Activated CD4-positive, alpha-beta T cell treated with anti-CD3 and anti-CD28 coated beads, Interleukin-2, amount 10 ng/mL, durations not matched to agents 24 days and 14 days (primary cell): ENCODE measurements at regions of chr4 and their contacts with region 1.

Region 1: DNA sequence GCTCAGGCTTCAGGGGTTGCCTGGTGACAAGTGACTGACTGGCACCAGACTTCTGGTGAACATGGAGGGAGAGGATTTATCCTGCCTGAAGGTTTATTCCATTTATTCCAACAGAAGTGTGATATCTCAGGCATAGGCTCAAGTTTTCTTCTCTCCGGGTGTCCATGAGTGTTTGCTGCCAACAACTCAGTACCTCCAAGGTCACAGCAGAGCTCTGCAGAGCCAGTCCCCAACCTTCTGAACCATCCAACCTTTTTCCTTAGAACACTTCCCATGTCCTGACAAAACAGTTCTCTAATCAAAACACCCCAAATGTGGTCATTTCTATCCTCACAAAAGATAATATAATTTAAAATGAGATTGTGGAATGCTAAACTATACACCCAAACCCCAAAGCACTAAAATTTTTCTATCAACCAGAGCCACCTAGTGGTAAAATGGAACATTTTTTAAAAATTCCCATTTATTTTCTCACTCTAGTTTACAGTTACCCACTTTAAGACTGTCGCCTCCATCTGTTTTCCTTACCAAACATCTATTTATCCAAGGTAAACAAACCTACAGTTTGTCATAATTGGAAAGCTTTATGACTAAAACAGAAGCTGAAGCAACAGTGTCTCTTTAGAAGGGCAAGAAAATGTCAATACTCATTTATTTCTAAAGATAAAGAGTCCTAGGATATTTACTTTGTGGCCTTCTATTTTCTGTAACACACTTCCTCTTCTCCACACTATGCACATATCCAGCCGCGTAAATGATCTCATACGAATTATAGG is 39.6 kb downstream of the TMEM154 start:
- DNase-seq: no peak
- H3K4me3 Mint-ChIP-seq: no peak overlapping the region
- H3K27ac Mint-ChIP-seq: no peak overlapping the region
- H3K4me1 Mint-ChIP-seq: peaks cover 24% of the 10 kb centered on the region
- H3K27me3 Mint-ChIP-seq: no peaks in the 10 kb centered on the region

Region 2: DNA sequence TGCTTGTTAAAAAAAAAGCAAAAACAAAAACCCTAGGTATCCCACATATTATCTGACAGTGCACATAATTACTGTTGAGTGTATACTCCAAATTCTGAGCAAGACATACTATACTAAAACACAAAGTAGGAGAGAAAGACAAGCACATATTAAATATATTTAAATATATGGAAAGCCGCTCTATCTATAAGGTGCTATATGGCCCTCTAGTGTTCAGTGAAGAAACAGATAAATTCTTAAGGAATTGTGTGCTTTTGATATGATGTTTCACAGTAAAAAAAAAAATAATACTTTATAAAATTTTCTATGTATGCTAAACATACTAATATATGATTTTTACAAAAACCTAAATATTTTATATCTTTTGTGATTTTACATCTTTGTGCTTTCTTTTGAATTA is 242.2 kb before region 1 on chr4:
- intact Hi-C with region 1: no loop called
- DNase-seq: no peak
- H3K4me3 Mint-ChIP-seq: no peak overlapping the region
- H3K27ac Mint-ChIP-seq: no peak overlapping the region
- H3K4me1 Mint-ChIP-seq: peaks cover 44% of the 10 kb centered on the region
- H3K27me3 Mint-ChIP-seq: no peaks in the 10 kb centered on the region

Region 3: DNA sequence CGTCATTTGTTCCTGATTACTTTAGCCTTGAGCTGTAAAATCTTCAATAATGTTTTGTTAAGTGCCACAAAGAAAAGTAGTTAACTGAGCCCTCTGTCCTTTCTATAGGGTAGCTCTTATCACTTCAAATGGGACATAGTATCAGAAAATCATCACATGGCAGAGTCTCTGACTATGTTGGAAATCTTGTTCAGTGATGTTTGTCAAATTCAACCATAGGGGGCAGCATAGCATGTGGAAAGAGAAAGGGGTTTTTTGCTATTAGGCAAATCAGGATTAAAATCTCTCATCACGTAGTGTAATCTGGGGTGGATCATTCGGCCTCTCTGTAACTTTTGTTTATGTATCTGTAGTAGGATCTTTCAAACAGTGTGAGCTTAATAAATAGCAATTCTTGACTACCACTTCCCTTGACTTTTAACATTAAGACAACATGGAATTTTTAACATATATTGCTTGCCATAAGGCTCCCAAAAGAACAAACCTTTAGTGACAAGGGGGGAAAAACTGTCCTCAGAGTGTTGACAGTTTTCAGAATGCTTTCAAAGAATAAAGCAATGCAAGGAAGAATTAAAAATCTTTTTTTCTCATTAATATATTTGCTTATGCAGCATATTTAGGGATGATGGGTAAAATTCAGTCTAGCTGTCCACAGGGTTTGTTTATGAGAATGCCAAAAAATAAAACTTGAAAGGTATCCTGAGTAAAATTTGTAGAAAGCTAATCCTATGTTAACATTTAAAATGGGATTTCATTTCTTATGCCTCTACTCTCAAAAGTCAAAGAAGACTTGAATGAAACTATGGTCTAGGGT is 231.5 kb before region 1 on chr4:
- intact Hi-C with region 1: loop called (anchors 1 kb)
- DNase-seq: peak; percentile 73
- H3K4me3 Mint-ChIP-seq: no peak overlapping the region
- H3K27ac Mint-ChIP-seq: no peak overlapping the region
- H3K4me1 Mint-ChIP-seq: peaks cover 4% of the 10 kb centered on the region
- H3K27me3 Mint-ChIP-seq: no peaks in the 10 kb centered on the region

Region 4: DNA sequence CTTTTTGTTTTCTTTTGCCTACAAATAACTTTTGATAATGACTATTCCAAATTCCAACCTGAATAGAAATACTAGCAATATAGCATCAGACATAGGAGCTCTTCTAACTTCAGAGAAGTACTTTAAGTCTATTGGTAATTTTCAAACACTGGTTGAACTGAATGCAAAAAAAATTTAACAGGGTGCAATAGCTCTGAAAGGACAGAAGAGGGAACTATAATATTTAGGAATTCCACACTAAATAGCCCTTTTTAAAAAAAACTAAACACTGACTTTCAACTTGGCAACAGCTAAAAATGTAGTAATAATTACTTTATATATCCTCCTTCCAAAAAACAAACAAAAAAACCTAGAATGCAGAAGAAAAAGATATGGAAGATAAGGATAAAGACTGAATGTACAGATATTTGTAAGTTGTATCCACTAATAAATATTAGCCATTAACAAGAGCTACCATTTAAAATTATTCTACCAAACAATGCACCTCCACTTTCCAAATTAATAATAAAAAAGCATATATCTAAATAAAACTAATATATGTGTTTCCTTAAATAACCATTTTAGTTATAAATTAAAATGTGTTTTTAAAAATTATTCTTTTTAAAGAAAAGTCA is 185.7 kb before region 1 on chr4:
- intact Hi-C with region 1: loop called (anchors 2 kb)
- DNase-seq: no peak
- H3K4me3 Mint-ChIP-seq: no peak overlapping the region
- H3K27ac Mint-ChIP-seq: no peak overlapping the region
- H3K4me1 Mint-ChIP-seq: peaks cover 29% of the 10 kb centered on the region
- H3K27me3 Mint-ChIP-seq: no peaks in the 10 kb centered on the region

Region 5: GRCh38 chr4:152500800-152501434 is 139.3 kb before region 1 on chr4:
- intact Hi-C with region 1: loop called (anchors 1 kb)
- DNase-seq: peak; percentile 92
- H3K4me3 Mint-ChIP-seq: no peak overlapping the region
- H3K27ac Mint-ChIP-seq: no peak overlapping the region
- H3K4me1 Mint-ChIP-seq: peaks cover 26% of the 10 kb centered on the region
- H3K27me3 Mint-ChIP-seq: no peaks in the 10 kb centered on the region

Region 6: DNA sequence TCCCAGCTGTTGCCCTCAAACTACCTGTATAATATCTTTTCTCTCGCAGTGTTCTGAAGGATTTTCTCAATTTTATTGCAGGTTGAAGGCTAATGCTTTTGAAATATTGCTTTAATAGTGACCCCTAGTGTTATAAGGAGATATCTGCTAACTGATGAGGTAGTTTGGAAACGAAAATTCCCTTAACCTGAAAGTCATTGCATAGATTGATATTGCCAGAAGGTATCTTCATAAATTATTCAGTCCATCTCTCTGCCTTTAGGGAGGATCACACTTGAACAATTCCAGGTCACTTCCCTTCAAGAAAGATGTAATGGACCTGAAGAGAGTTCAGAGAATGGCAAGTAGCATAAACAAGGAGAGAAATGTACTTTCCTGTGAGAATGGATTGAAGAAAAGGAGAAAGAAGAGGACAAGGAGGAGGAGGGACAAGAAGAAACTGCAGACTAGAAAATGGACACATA is 95.2 kb after region 1 on chr4:
- intact Hi-C with region 1: loop called (anchors 5 kb)
- DNase-seq: no peak
- H3K4me3 Mint-ChIP-seq: no peak overlapping the region
- H3K27ac Mint-ChIP-seq: no peak overlapping the region
- H3K4me1 Mint-ChIP-seq: peaks cover 2% of the 10 kb centered on the region
- H3K27me3 Mint-ChIP-seq: peaks cover 8% of the 10 kb centered on the region

Region 7: GRCh38 chr4:152996108-152996571 is 355.9 kb after region 1 on chr4:
- intact Hi-C with region 1: no loop called
- DNase-seq: no peak
- H3K4me3 Mint-ChIP-seq: no peak overlapping the region
- H3K27ac Mint-ChIP-seq: no peak overlapping the region
- H3K4me1 Mint-ChIP-seq: no peaks in the 10 kb centered on the region
- H3K27me3 Mint-ChIP-seq: no peaks in the 10 kb centered on the region